ENCODE measurements at regions of chr10 and their contacts with region 1.

Region 1: GRCh38 chr10:126658928-126659327 is 11.6 kb downstream of the C10orf90 start:
- DNase-seq: no peak
- H3K4me3 ChIP-seq: no peak overlapping the region
- CTCF ChIP-seq: no peak

Region 2: DNA sequence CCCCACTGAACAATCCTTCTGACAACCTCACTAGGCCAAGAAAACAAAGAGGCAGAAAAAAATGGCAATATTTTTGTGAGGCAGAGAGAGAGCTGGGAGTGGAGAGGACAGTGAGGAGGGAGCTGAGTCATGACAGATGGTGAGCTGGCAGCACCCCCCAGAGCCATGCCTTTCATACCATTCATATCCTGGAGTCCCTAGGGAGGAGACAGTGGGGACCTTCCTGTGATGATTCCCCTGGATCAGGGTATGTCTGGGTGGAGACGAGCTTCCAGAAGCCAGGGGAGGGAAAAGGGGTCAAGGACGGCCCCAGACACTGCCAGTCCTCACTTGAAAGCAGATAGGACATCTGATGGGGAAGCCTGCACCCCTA is 431.2 kb before region 1 on chr10:
- in situ Hi-C with region 1: no loop called
- DNase-seq: no peak
- H3K4me3 ChIP-seq: no peak overlapping the region
- CTCF ChIP-seq: no peak

Region 3: DNA sequence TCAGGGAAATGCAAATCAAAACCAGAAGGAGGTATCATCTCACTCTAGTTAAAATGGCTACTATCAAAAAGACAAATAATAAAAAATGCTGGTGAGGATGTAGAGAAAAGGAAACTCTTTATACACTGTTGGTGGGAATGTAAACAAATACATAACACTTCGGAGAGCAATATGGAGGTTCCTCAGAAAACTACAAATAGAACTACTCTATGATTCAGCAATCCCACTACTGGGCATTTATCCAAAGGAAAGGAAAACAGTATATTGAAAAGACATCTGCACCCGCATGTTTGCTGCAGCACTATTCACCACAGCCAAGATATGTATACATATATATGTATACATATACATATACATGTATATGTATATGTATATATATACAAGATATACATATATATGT is 82.6 kb before region 1 on chr10:
- in situ Hi-C with region 1: no loop called
- DNase-seq: peak; percentile 47
- H3K4me3 ChIP-seq: no peak overlapping the region
- CTCF ChIP-seq: no peak

Region 4: GRCh38 chr10:126592901-126593300 is 66.0 kb before region 1 on chr10:
- in situ Hi-C with region 1: no loop called
- DNase-seq: no peak
- H3K4me3 ChIP-seq: no peak overlapping the region
- CTCF ChIP-seq: no peak

Region 5: DNA sequence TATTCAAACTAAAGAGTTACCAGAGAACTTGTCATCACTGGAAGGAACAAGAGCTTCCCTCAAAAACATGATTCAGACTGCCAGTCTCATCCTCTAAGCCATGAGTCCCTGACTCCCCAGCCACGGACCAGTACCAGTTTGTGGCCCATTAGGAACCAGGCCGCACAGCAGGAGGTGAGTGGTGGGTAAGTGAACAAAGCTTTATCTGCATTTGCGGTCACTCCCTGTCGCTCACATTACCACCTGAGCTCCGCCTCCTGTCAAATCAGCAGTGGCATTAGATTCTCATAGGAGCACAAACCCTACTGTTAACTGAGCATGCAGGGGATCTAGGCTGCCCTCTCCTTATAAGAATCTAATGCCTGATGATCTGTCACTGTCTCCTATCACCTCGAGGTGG is 53.8 kb after region 1 on chr10:
- in situ Hi-C with region 1: loop called (anchors 10 kb)
- DNase-seq: no peak
- H3K4me3 ChIP-seq: no peak overlapping the region
- CTCF ChIP-seq: no peak

Region 6: GRCh38 chr10:126744571-126744970 is 85.6 kb after region 1 on chr10:
- in situ Hi-C with region 1: loop called (anchors 5 kb)
- DNase-seq: no peak
- H3K4me3 ChIP-seq: no peak overlapping the region
- CTCF ChIP-seq: no peak

Measured in astrocyte of the cerebellum (primary cell).